ENCODE measurements at regions of chr1 and their contacts with region 1.

Region 1: DNA sequence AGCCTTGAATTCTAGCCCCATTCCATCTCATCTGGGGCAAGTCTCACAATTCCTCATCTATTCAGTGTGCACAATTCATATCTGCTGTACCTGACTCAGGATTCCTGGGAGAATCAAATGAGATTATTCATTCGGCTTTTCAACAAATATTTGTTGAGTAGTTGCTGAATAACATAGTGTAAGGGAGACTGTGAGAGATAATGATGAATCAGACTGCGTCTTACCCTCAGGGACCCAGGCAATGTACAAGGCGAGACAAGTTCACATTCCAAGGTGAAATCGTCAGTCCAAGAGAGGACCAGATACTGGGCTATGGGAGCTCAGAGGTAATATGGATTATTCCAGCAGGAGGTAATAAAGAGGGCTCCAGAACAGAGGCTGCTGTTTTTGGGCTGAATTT is 67.8 kb upstream of the SMYD2 start:
- DNase-seq: no peak
- H3K4me3 ChIP-seq: no peak overlapping the region
- H3K27ac ChIP-seq: no peak overlapping the region
- H3K4me1 ChIP-seq: peaks cover 4 to 9% (median 7%) of the 10 kb centered on the region in 4 experiments; a peak in 6 of 7 replicates
- H3K27me3 ChIP-seq: no peaks in the 10 kb centered on the region
- CTCF ChIP-seq: no peak
- EP300 ChIP-seq: no peak
- POLR2A ChIP-seq: no peak
- RAD21 ChIP-seq: no peak

Region 2: GRCh38 chr1:213987927-213988506 is 225.1 kb before region 1 on chr1 and contains the start of gene PROX1:
- CTCF ChIA-PET with region 1: no interaction called
- POLR2A ChIA-PET with region 1: no interaction called
- DNase-seq: no peak
- H3K4me3 ChIP-seq: peak within 1 kb of the TSS; percentile 55 to 85 (median 69)
- H3K27ac ChIP-seq: no peak within 1 kb of the TSS; the same call in 1 of the 2 replicates
- H3K4me1 ChIP-seq: peaks cover 21 to 42% (median 27%) of the 10 kb centered on the region in 4 experiments
- H3K27me3 ChIP-seq: peaks cover 32 to 66% (median 61%) of the 10 kb centered on the region in 4 experiments
- CTCF ChIP-seq: no peak
- EP300 ChIP-seq: no peak
- POLR2A ChIP-seq: peak in 1 of 2 experiments; percentile 52; a peak in 1 of 3 replicates
- RAD21 ChIP-seq: no peak; a peak in 1 of 4 replicates
- total RNA-seq, gene PROX1: 1.5 and 2.0 TPM in 2 replicates

Region 3: GRCh38 chr1:214192825-214193643 is 20.1 kb before region 1 on chr1:
- CTCF ChIA-PET with region 1: interaction called, 11 read pairs
- POLR2A ChIA-PET with region 1: no interaction called
- DNase-seq: no peak
- H3K4me3 ChIP-seq: no peak overlapping the region
- H3K27ac ChIP-seq: no peak overlapping the region
- H3K4me1 ChIP-seq: peaks cover 0 to 9% (median 3%) of the 10 kb centered on the region in 4 experiments; a peak in 4 of 7 replicates
- H3K27me3 ChIP-seq: peaks cover under 1 to 11% (median 11%) of the 10 kb centered on the region in 4 experiments
- CTCF ChIP-seq: no peak
- EP300 ChIP-seq: no peak
- POLR2A ChIP-seq: no peak
- RAD21 ChIP-seq: no peak

Region 4: GRCh38 chr1:214198571-214198970 is 14.6 kb before region 1 on chr1:
- CTCF ChIA-PET with region 1: interaction called, 36 read pairs
- POLR2A ChIA-PET with region 1: no interaction called
- DNase-seq: no peak
- H3K4me3 ChIP-seq: no peak overlapping the region
- H3K27ac ChIP-seq: no peak overlapping the region
- H3K4me1 ChIP-seq: peaks cover 0 to under 1% (median 0%) of the 10 kb centered on the region in 4 experiments; a peak in 1 of 7 replicates
- H3K27me3 ChIP-seq: no peaks in the 10 kb centered on the region
- CTCF ChIP-seq: no peak
- EP300 ChIP-seq: no peak
- POLR2A ChIP-seq: no peak
- RAD21 ChIP-seq: no peak

Region 5: DNA sequence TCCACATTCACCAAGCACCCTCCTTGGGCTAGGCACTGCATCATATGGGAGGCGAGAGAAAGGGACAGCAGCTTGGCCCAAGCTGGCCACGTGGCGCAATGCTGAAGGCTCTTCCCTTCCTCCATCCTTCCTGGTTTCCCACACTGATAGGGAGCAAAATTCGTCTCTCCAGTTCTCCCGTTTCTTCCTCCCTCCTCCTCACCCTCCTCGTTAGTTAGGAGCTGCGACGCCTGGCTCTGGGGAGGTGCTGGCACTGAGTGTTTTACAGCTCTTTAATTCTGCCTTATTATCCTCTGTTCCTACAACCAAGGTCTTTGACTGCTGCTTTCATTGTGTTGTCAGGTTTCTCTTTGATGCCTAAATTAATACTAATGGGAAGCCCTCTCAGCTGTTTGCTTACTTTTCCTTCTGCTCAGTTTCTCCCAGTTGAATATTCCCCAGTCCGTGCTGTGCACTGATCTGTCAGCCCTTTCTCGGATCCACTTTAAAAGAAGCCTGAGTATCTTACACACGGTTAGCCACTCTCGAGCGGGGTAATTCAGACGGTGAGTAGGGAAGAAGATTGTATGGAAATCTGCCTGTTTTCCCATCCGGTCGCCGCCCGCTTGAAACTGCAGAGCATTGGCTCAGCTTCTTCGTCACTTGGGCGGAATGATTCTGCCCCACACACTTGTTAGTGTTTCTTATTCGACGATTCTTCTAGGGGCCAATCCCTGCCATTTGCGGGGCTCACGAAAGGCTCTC is 11.6 kb after region 1 on chr1:
- CTCF ChIA-PET with region 1: interaction called, 22 read pairs
- POLR2A ChIA-PET with region 1: interaction called, 3 read pairs
- DNase-seq: peak; percentile 13 to 54
- H3K4me3 ChIP-seq: peak overlapping the region; percentile 21 to 53 (median 44); a peak in 6 of 8 replicates
- H3K27ac ChIP-seq: no peak overlapping the region
- H3K4me1 ChIP-seq: peaks cover 2 to 14% (median 5%) of the 10 kb centered on the region in 4 experiments; a peak in 4 of 7 replicates
- H3K27me3 ChIP-seq: peaks cover 0 to 20% (median 15%) of the 10 kb centered on the region in 4 experiments; a peak in 4 of 7 replicates
- CTCF ChIP-seq: no peak
- EP300 ChIP-seq: no peak
- POLR2A ChIP-seq: no peak
- RAD21 ChIP-seq: no peak

Region 6: DNA sequence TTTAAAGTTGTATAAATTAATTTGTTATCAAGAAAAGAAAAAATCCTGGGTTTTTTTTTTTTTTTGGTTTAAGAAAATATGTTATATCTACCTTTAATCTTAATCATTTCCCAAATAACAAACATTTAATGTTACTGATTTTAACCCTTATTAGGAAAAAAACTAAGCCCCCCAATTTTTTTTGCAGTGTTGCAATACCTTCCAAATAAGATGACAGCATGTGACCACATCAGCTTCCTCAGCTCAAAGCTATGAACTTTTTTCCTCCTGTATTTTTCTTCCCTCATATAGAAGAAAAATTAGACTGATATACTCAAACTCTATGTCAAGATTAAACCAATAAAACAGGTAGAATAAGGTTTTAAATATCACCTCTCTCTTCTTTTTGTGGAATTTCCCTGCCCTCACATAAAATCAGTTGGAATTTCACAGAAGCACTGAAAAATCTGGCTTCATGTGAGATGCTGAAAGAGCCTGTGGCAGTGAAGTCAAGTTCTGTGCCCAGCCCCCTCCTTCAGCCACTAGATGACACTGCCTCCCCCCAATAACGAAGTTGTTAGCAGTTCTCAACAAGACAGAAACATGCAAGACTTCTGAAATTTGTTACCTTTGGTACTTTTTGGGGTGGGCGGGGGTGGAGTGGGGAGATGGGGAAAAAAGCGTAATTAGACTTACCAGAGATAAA is 58.2 kb after region 1 on chr1:
- CTCF ChIA-PET with region 1: interaction called, 10 read pairs
- POLR2A ChIA-PET with region 1: no interaction called
- DNase-seq: no peak
- H3K4me3 ChIP-seq: no peak overlapping the region
- H3K27ac ChIP-seq: no peak overlapping the region
- H3K4me1 ChIP-seq: peaks cover 0 to 2% (median 0%) of the 10 kb centered on the region in 4 experiments; a peak in 4 of 7 replicates
- H3K27me3 ChIP-seq: no peaks in the 10 kb centered on the region
- CTCF ChIP-seq: peak; percentile 39 to 50 (median 46)
- EP300 ChIP-seq: no peak
- POLR2A ChIP-seq: no peak
- RAD21 ChIP-seq: peak; percentile 68 to 77

Region 7: GRCh38 chr1:214316593-214316992 is 103.5 kb after region 1 on chr1:
- CTCF ChIA-PET with region 1: interaction called, 18 read pairs
- POLR2A ChIA-PET with region 1: no interaction called
- DNase-seq: peak; percentile 55 to 88
- H3K4me3 ChIP-seq: peak overlapping the region in 1 of 4 experiments; percentile 45; a peak in 2 of 8 replicates
- H3K27ac ChIP-seq: no peak overlapping the region
- H3K4me1 ChIP-seq: peaks cover 3 to 23% (median 15%) of the 10 kb centered on the region in 4 experiments
- H3K27me3 ChIP-seq: peaks cover 20 to 50% (median 45%) of the 10 kb centered on the region in 4 experiments; a peak in 6 of 7 replicates
- CTCF ChIP-seq: no peak
- EP300 ChIP-seq: peak in 1 of 2 experiments; percentile 97; a peak in 2 of 3 replicates
- POLR2A ChIP-seq: 0 out of 3 replicates have a peak, but pooled peaks of 1 of the 2 experiments have one; percentile 44
- RAD21 ChIP-seq: no peak

Region 8: DNA sequence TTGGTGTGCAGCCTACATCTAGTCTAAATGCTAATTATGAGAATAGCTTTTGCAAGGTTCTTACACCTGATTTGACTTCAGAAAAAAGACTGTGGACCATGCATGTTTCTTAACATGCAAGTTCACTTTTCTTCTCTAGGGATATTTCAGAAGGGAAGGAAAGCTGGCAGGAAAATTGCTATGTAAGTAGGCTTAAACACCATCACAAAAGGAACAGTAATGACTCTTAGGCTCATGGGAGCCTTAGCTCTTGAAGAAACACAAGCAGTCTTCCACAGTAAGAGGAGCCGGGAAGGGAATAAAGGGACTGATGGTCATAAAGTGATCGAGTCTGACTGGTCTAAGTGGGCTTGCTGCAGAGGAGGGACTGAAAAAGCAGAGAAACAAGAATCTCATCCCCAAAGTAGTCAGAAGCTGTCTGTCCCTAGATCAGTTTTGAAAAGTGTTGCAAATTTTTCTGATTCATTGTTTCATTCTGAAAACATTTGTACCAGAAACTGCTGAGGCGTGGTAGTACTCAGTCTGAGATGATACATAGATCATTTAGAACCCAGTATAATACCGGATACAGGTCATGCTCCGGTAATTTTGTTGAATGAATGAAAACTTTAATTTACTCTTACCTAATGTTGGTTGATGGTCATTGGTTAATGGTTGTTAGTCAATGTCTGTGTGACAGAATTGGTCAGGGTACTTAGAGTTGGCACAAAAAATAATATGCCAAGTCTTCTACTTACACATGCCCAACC is 108.7 kb after region 1 on chr1:
- CTCF ChIA-PET with region 1: interaction called, 541 read pairs
- POLR2A ChIA-PET with region 1: no interaction called
- DNase-seq: no peak
- H3K4me3 ChIP-seq: no peak overlapping the region
- H3K27ac ChIP-seq: no peak overlapping the region
- H3K4me1 ChIP-seq: peaks cover 3 to 14% (median 9%) of the 10 kb centered on the region in 4 experiments; a peak in 6 of 7 replicates
- H3K27me3 ChIP-seq: peaks cover 9 to 23% (median 18%) of the 10 kb centered on the region in 4 experiments; a peak in 6 of 7 replicates
- CTCF ChIP-seq: no peak
- EP300 ChIP-seq: no peak
- POLR2A ChIP-seq: no peak
- RAD21 ChIP-seq: no peak

Region 9: DNA sequence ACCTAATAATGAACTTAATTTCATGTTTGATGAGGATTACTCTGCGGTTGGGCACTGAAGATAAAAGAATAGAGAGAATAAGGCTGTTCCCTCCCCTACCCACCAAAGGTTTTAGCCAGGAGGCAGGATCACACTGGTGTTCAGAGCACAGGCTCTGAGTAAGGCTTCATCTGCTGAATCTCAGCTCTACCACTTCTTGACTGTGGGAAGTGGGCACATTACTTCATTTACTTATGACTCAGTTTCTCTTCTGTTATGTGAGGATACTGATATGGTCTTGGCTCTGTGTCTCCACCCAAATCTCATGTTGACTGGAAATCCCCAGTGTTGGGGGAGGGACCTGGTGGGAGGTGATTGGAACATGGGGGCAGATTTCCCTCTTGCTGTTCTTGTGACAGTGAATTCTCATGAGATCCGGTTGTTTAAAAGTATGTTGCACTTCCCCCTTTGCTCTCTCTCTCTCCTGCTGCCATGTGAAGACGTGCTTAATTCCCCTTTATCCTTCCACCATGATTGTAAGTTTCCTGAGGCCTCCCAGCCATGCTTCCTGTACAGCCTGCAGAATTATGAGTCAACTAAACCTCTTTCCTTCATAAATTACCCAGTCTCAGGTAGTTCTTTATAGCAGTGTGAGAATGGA is 147.5 kb after region 1 on chr1:
- CTCF ChIA-PET with region 1: no interaction called
- POLR2A ChIA-PET with region 1: no interaction called
- DNase-seq: no peak
- H3K4me3 ChIP-seq: no peak overlapping the region
- H3K27ac ChIP-seq: no peak overlapping the region
- H3K4me1 ChIP-seq: no peaks in the 10 kb centered on the region
- H3K27me3 ChIP-seq: no peaks in the 10 kb centered on the region
- CTCF ChIP-seq: no peak
- EP300 ChIP-seq: no peak
- POLR2A ChIP-seq: no peak
- RAD21 ChIP-seq: no peak